Endothelial cell of umbilical vein (primary cell): ENCODE measurements at regions of chr11 and their contacts with region 1.

Region 1: DNA sequence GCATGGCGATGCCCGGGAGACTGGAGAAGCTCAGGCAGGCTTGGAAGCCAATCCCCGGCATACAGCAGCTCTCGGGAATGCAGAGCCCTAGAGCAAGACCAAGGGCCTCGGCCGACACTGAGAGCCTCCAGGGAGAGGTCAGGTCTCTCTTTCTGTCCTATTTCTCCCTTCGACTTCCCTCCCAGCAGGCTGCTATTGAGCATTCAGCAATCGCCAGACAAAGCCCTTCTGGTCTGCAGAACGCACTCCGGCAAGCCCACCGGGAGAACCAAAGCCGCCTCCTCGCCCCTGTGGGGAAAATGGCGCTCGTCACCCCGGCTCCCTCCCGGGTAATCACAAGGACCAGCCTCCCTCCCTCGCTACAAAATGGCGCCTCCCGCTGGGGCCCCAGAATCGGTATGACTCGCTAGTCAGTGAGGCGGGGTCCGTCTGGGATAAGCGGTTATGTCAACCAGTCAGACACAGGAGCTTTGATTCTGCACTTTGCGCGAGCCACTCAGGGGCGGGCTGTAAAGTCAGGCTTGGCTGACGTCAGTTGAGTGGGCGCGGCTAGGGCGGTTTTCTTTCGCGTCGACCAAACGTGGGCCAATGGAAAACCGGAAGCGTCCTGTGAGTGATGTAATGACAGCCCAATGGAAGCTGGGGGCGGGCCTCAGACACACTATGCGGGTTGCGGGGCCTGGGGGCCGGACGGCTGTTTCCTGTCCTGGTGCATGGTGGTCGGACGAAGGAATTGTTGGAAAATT is at the start of gene ZNF143:
- DNase-seq: peak; percentile 100
- H3K4me3 ChIP-seq: peak within 1 kb of the TSS; percentile 92 to 97 (median 94)
- H3K27ac ChIP-seq: peak within 1 kb of the TSS; percentile 95
- H3K4me1 ChIP-seq: peaks cover 15% of the 10 kb centered on the region
- H3K27me3 ChIP-seq: no peaks in the 10 kb centered on the region
- CTCF ChIP-seq: no peak
- POLR2A ChIP-seq: peak; percentile 72
- total RNA-seq, gene ZNF143: 19.0 and 22.1 TPM in 2 replicates

Region 2: DNA sequence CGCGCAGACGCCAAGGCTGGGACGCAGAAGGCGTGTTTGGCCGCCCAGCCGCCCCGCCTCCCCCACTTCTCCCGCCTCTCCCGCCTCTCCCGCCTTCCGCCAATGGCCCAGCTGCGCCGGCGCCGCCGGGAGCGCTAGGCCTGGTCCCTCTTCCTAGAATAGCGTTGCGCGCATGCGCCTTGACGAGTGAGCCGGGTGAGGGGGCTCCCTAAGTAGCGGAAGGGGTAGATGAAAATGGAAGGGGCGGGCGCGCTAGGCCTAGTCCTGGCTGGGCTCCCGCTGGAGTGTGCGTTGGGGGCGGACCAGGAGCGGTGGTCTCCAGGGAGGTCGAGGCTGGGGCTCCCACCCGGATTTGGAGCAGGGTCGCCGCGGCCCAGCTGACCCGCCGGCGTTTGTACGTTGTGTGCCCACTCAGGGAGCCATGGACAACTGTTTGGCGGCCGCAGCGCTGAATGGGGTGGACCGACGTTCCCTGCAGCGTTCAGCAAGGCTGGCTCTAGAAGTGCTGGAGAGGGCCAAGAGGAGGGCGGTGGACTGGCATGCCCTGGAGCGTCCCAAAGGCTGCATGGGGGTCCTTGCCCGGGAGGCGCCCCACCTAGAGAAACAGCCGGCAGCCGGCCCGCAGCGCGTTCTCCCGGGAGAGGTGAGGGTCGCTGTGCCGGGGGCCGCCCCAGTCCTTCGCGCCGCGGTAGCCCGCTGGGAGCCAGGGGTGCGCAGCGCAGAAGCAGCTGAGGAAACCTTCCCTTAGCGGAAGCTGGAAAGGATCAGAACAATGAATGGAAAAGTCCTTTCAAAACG is 549.3 kb before region 1 on chr11 and contains the start of gene AKIP1:
- CTCF ChIA-PET with region 1: no interaction called
- POLR2A ChIA-PET with region 1: interaction called, 3 read pairs
- dilution Hi-C with region 1: no loop called
- intact Hi-C with region 1: loop called (anchors 2 kb)
- DNase-seq: peak; percentile 98
- H3K4me3 ChIP-seq: peak within 1 kb of the TSS; percentile 63 to 95 (median 82)
- H3K27ac ChIP-seq: peak within 1 kb of the TSS; percentile 63
- H3K4me1 ChIP-seq: peaks cover 32% of the 10 kb centered on the region
- H3K27me3 ChIP-seq: no peaks in the 10 kb centered on the region
- CTCF ChIP-seq: no peak
- POLR2A ChIP-seq: peak; percentile 42
- total RNA-seq, gene AKIP1: 21.9 and 23.4 TPM in 2 replicates

Region 3: GRCh38 chr11:9025101-9025850 is 435.2 kb before region 1 on chr11:
- CTCF ChIA-PET with region 1: no interaction called
- POLR2A ChIA-PET with region 1: no interaction called
- dilution Hi-C with region 1: no loop called
- intact Hi-C with region 1: no loop called
- DNase-seq: no peak
- H3K4me3 ChIP-seq: no peak overlapping the region
- H3K27ac ChIP-seq: no peak overlapping the region
- H3K4me1 ChIP-seq: no peaks in the 10 kb centered on the region
- H3K27me3 ChIP-seq: peaks cover 4 to 6% of the 10 kb centered on the region in 2 experiments
- CTCF ChIP-seq: no peak
- POLR2A ChIP-seq: no peak

Region 4: GRCh38 chr11:9314291-9315036 is 146.0 kb before region 1 on chr11 and contains the start of gene TMEM41B:
- CTCF ChIA-PET with region 1: no interaction called
- POLR2A ChIA-PET with region 1: no interaction called
- dilution Hi-C with region 1: no loop called
- intact Hi-C with region 1: loop called (anchors 1 kb)
- DNase-seq: peak; percentile 98
- H3K4me3 ChIP-seq: peak within 1 kb of the TSS; percentile 60 to 98 (median 93)
- H3K27ac ChIP-seq: peak within 1 kb of the TSS; percentile 87
- H3K4me1 ChIP-seq: peaks cover 15% of the 10 kb centered on the region
- H3K27me3 ChIP-seq: no peaks in the 10 kb centered on the region
- CTCF ChIP-seq: no peak
- POLR2A ChIP-seq: peak; percentile 80
- total RNA-seq, gene TMEM41B: 38.6 and 39.0 TPM in 2 replicates

Region 5: DNA sequence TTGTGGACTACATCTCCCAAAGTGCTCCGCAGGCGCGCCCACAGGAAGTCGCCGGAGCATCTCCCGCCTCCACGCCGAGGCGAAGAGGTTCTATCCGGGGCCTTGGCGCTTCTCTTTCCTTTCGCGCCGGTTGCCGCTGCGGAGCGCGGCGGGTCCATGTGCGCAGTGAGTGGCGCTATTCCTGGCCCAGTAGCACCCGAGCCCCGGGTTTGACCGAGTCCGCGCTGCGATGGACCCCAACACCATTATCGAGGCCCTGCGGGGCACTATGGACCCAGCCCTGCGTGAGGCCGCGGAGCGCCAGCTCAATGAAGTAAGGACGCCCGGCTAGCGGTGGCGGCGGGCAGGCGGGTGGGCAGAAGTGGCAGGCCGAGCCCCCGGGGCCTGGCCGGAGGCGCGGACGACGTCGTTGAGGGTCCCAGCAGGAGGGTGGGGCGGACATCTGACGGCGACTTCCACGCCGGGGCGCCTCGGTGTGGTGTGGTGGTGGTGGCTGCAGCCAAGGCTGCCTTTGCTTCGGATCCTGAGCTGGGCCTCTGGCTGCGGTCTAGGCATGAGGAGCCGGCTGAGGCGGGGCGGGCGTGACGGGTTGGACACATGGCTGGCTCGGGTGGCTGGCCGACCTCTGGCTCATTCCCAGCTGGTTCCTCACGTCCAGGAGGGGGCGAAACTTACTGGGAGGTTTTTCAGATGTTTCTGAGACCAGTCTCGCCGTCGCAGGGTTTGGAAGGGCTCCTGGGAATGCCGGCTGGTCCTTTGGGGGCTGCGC is 75.8 kb before region 1 on chr11 and contains the start of gene IPO7:
- CTCF ChIA-PET with region 1: no interaction called
- POLR2A ChIA-PET with region 1: interaction called, 6 read pairs
- dilution Hi-C with region 1: no loop called
- intact Hi-C with region 1: loop called (anchors 2 kb)
- DNase-seq: peak; percentile 90
- H3K4me3 ChIP-seq: peak within 1 kb of the TSS; percentile 65 to 90 (median 68)
- H3K27ac ChIP-seq: peak within 1 kb of the TSS; percentile 76
- H3K4me1 ChIP-seq: peaks cover 18% of the 10 kb centered on the region
- H3K27me3 ChIP-seq: no peaks in the 10 kb centered on the region
- CTCF ChIP-seq: peak; percentile 42 to 49
- POLR2A ChIP-seq: peak; percentile 86
- total RNA-seq, gene IPO7: 161 and 170 TPM in 2 replicates

Region 6: DNA sequence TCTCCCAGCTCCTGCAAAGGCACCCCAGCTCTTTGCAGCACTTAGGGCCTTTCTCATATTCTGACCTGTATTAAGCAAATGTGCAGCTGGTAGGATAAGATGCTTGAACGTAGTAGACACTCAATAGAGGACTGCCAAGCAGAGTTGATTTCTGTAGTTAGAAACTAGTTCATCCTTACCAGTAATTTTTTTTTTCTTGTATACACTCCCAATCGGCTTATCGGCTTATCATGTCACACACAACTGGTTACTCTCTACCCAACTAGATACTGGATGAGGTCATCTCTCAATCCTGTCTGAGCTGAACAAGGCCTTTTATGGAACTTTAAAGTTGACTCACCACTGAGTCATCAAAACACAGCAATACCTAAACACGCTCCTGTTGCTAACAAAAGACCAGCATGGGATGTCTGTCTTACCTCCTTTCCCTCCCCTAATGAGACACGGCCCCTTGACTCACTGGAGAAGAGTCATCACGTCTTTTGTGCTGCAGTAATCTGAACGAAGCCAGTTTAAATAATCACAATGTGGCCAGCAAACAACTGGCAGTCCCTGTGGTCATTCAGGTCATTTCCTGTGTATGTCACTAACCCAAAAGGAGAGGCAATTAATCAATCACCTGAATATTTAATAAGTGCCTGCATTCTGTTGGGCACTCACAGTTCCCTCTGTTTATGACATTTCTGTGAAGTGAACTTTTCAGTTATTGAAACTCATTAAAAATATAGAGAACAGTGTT is 105.5 kb after region 1 on chr11:
- CTCF ChIA-PET with region 1: no interaction called
- POLR2A ChIA-PET with region 1: interaction called, 4 read pairs
- dilution Hi-C with region 1: no loop called
- intact Hi-C with region 1: loop called (anchors 1 kb)
- DNase-seq: peak; percentile 99
- H3K4me3 ChIP-seq: no peak overlapping the region
- H3K27ac ChIP-seq: peak overlapping the region; percentile 96
- H3K4me1 ChIP-seq: peaks cover 31% of the 10 kb centered on the region
- H3K27me3 ChIP-seq: no peaks in the 10 kb centered on the region
- CTCF ChIP-seq: no peak
- POLR2A ChIP-seq: no peak

Region 7: DNA sequence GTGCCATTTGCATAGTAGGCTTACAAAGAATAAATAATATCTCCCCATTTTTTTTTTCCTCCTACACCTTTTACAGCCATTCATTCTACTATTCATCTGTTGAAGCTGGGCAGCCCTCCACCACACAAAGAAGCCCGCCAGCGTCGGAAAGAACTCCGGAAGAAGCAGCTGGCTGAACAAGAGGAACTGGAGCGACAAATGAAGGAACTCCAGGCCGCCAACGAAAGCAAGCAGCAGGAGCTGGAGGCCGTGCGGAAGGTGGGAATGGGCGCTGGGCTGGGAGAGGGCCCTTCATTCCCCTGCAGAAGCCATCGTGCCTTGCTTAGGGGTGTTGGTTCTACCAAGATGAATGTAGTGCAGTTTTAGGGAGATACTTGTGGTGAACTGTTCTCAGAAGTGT is 272.0 kb after region 1 on chr11:
- CTCF ChIA-PET with region 1: no interaction called
- POLR2A ChIA-PET with region 1: no interaction called
- dilution Hi-C with region 1: no loop called
- intact Hi-C with region 1: loop called (anchors 5 kb)
- DNase-seq: no peak
- H3K4me3 ChIP-seq: no peak overlapping the region
- H3K27ac ChIP-seq: no peak overlapping the region
- H3K4me1 ChIP-seq: peaks cover 5% of the 10 kb centered on the region
- H3K27me3 ChIP-seq: no peaks in the 10 kb centered on the region
- CTCF ChIP-seq: no peak
- POLR2A ChIP-seq: no peak

Region 8: DNA sequence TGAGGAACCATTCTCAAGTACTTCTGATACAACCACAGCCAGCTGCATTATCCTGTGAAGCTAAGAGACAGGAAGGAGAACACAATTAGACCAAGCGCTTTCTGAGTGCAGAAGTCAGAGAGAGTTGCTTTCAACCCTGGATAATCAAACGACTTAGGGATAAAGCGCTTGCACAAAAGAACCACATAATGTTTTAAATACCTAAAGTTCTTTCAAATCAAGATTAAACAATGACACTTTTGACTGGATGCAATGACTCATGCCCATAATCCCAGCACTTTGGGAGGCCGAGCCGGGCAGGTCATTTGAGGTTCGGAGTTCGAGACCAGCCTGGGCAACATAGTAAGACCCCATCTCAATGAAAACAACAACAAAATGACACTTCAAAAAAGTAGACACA is 348.4 kb after region 1 on chr11:
- CTCF ChIA-PET with region 1: no interaction called
- POLR2A ChIA-PET with region 1: no interaction called
- dilution Hi-C with region 1: no loop called
- intact Hi-C with region 1: no loop called
- DNase-seq: no peak
- H3K4me3 ChIP-seq: no peak overlapping the region
- H3K27ac ChIP-seq: no peak overlapping the region
- H3K4me1 ChIP-seq: no peaks in the 10 kb centered on the region
- H3K27me3 ChIP-seq: no peaks in the 10 kb centered on the region
- CTCF ChIP-seq: no peak
- POLR2A ChIP-seq: no peak